ENCODE measurements at regions of chr15 and their contacts with region 1.

Region 1: GRCh38 chr15:60397772-60398445 is at the start of gene ANXA2:
- DNase-seq: peak; percentile 66 to 93 (median 84)
- ATAC-seq: peak; percentile 77
- H3K4me3 ChIP-seq: peak within 1 kb of the TSS; percentile 72
- H3K4me3 Mint-ChIP-seq: peak within 1 kb of the TSS; percentile 92
- H3K27ac ChIP-seq: peak within 1 kb of the TSS; percentile 37 to 75
- H3K27ac Mint-ChIP-seq: peak within 1 kb of the TSS; percentile 97
- H3K4me1 ChIP-seq: peaks cover 58% of the 10 kb centered on the region
- H3K4me1 Mint-ChIP-seq: peaks cover 48% of the 10 kb centered on the region
- H3K27me3 ChIP-seq: no peaks in the 10 kb centered on the region
- H3K27me3 Mint-ChIP-seq: peaks cover 10% of the 10 kb centered on the region
- CTCF ChIP-seq: no peak
- total RNA-seq, gene ANXA2: 70.8 to 74.5 TPM

Region 2: GRCh38 chr15:59656897-59657634 is 740.8 kb before region 1 on chr15 and contains the start of gene GTF2A2:
- CTCF ChIA-PET with region 1: no interaction called
- POLR2A ChIA-PET with region 1: interaction called, 4 read pairs
- intact Hi-C with region 1: loop called in 1 of 2 experiments (anchors 5 kb)
- DNase-seq: peak; percentile 82 to 96 (median 89)
- ATAC-seq: peak; percentile 98
- H3K4me3 ChIP-seq: peak within 1 kb of the TSS; percentile 94
- H3K4me3 Mint-ChIP-seq: peak within 1 kb of the TSS; percentile 57
- H3K27ac ChIP-seq: peak within 1 kb of the TSS; percentile 77 to 86
- H3K27ac Mint-ChIP-seq: no peak within 1 kb of the TSS
- H3K4me1 ChIP-seq: peaks cover 17% of the 10 kb centered on the region
- H3K4me1 Mint-ChIP-seq: no peaks in the 10 kb centered on the region
- H3K27me3 ChIP-seq: no peaks in the 10 kb centered on the region
- H3K27me3 Mint-ChIP-seq: no peaks in the 10 kb centered on the region
- CTCF ChIP-seq: no peak
- total RNA-seq, gene GTF2A2: 40.3 to 44.6 TPM

Region 3: GRCh38 chr15:60351066-60351465 is 46.8 kb before region 1 on chr15:
- CTCF ChIA-PET with region 1: no interaction called
- POLR2A ChIA-PET with region 1: no interaction called
- intact Hi-C with region 1: no loop called
- DNase-seq: no peak
- ATAC-seq: no peak
- H3K4me3 ChIP-seq: no peak overlapping the region
- H3K4me3 Mint-ChIP-seq: no peak overlapping the region
- H3K27ac ChIP-seq: no peak overlapping the region
- H3K27ac Mint-ChIP-seq: no peak overlapping the region
- H3K4me1 ChIP-seq: no peaks in the 10 kb centered on the region
- H3K4me1 Mint-ChIP-seq: no peaks in the 10 kb centered on the region
- H3K27me3 ChIP-seq: no peaks in the 10 kb centered on the region
- H3K27me3 Mint-ChIP-seq: no peaks in the 10 kb centered on the region
- CTCF ChIP-seq: no peak

Region 4: GRCh38 chr15:60408438-60409105 is 10.7 kb after region 1 on chr15:
- CTCF ChIA-PET with region 1: interaction called, 4 read pairs
- POLR2A ChIA-PET with region 1: interaction called, 25 read pairs
- intact Hi-C with region 1: no loop called
- DNase-seq: peak in 3 of 14 experiments; percentile 55 to 79 (median 61)
- ATAC-seq: peak; percentile 78
- H3K4me3 ChIP-seq: no peak overlapping the region
- H3K4me3 Mint-ChIP-seq: no peak overlapping the region
- H3K27ac ChIP-seq: peak overlapping the region in 1 of 2 donors; percentile 49
- H3K27ac Mint-ChIP-seq: peak overlapping the region; percentile 25
- H3K4me1 ChIP-seq: peaks cover 15% of the 10 kb centered on the region
- H3K4me1 Mint-ChIP-seq: peaks cover 10% of the 10 kb centered on the region
- H3K27me3 ChIP-seq: no peaks in the 10 kb centered on the region
- H3K27me3 Mint-ChIP-seq: no peaks in the 10 kb centered on the region
- CTCF ChIP-seq: no peak

Region 5: DNA sequence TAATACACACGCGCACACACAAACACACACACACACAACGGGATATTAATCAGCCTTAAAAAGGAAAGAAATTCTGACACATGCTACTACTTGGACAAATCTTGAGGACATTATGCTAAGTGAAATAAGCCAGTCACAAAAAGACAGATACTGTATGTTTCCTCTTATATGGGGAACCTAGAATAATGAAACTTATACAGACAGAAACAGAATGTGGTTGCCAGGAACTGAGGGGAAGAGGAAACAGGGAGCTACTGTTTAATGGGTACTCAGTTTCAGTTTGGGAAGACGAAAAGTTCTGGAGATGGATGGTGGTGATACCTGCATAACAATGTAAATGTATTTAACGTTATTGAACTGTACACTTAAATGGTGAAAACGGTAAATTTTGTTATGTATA is 60.8 kb after region 1 on chr15:
- CTCF ChIA-PET with region 1: no interaction called
- POLR2A ChIA-PET with region 1: no interaction called
- intact Hi-C with region 1: no loop called
- DNase-seq: no peak
- ATAC-seq: no peak
- H3K4me3 ChIP-seq: no peak overlapping the region
- H3K4me3 Mint-ChIP-seq: no peak overlapping the region
- H3K27ac ChIP-seq: no peak overlapping the region
- H3K27ac Mint-ChIP-seq: no peak overlapping the region
- H3K4me1 ChIP-seq: no peaks in the 10 kb centered on the region
- H3K4me1 Mint-ChIP-seq: peaks cover 5% of the 10 kb centered on the region
- H3K27me3 ChIP-seq: no peaks in the 10 kb centered on the region
- H3K27me3 Mint-ChIP-seq: no peaks in the 10 kb centered on the region
- CTCF ChIP-seq: no peak

Region 6: GRCh38 chr15:60478566-60479360 is 80.9 kb after region 1 on chr15 and contains the start of gene ICE2:
- CTCF ChIA-PET with region 1: no interaction called
- POLR2A ChIA-PET with region 1: interaction called, 11 read pairs
- intact Hi-C with region 1: loop called (anchors 2 kb)
- DNase-seq: peak; percentile 89 to 98 (median 94)
- ATAC-seq: peak; percentile 90
- H3K4me3 ChIP-seq: peak within 1 kb of the TSS; percentile 92
- H3K4me3 Mint-ChIP-seq: peak within 1 kb of the TSS; percentile 98
- H3K27ac ChIP-seq: peak within 1 kb of the TSS; percentile 86 to 92
- H3K27ac Mint-ChIP-seq: peak within 1 kb of the TSS; percentile 99
- H3K4me1 ChIP-seq: peaks cover 26% of the 10 kb centered on the region
- H3K4me1 Mint-ChIP-seq: peaks cover 68% of the 10 kb centered on the region
- H3K27me3 ChIP-seq: no peaks in the 10 kb centered on the region
- H3K27me3 Mint-ChIP-seq: no peaks in the 10 kb centered on the region
- CTCF ChIP-seq: no peak
- total RNA-seq, gene ICE2: 20.4 to 23.4 TPM